B cell (primary cell): ENCODE measurements at regions of chr16 and their contacts with region 1.

Region 1: DNA sequence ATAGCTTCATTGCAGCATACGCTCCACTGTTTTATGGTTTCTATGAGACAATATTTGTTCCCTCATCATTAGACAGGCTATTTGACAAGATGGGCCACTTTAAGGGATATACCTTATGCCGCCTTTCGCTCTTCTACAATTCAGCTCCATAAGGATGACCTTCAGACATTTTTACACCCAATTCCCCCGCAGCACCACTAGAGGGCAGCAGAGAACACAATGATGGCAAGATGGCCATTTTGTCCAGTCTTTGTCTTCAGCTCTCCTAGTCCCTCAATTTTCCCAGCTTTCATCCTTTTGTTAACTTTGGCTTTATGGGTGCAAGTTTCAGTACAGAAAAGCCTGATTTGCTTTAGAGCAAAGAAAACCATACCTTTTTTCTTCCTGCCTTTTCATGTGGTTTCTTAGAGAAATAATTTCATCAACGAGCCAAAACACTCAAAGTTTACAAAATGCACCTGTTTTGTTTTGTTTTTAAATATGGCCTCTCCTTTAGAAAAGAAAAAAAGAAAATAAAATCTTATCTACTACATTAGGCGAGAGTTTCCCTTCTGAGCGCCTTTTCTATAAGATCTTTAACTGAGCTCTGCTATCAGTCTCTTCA is 355.3 kb downstream of the TOX3 start:
- DNase-seq: peak; percentile 60
- ATAC-seq: no peak
- H3K4me3 ChIP-seq: no peak overlapping the region
- H3K4me3 Mint-ChIP-seq: no peak overlapping the region
- H3K27ac ChIP-seq: no peak overlapping the region
- H3K27ac Mint-ChIP-seq: no peak overlapping the region
- H3K4me1 ChIP-seq: no peaks in the 10 kb centered on the region
- H3K4me1 Mint-ChIP-seq: no peaks in the 10 kb centered on the region
- H3K27me3 ChIP-seq: no peaks in the 10 kb centered on the region
- H3K27me3 Mint-ChIP-seq: no peaks in the 10 kb centered on the region
- CTCF ChIP-seq: peak; percentile 97

Region 2: DNA sequence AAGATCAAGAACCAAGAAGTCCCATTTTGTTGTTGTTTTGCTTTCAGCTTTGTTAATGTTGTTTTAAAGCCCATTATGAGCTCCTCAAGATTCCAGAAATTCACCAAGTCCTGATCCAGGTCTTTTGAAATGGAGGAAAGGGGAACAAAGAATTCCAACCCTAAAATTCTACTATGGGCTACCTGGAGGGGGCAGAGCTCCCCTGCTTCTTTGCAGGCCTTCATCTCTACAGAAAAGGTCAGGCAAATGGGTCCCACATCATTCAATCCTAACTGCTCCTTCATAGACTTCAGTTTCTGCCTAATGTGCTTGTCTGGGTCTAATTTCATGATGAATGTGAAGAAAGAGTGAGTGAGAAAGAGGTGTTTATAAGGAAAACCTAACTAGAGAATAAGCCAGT is 20.2 kb before region 1 on chr16:
- CTCF ChIA-PET with region 1: interaction called, 14 read pairs
- POLR2A ChIA-PET with region 1: no interaction called
- intact Hi-C with region 1: no loop called
- DNase-seq: no peak
- ATAC-seq: no peak
- H3K4me3 ChIP-seq: no peak overlapping the region
- H3K4me3 Mint-ChIP-seq: no peak overlapping the region
- H3K27ac ChIP-seq: no peak overlapping the region
- H3K27ac Mint-ChIP-seq: no peak overlapping the region
- H3K4me1 ChIP-seq: no peaks in the 10 kb centered on the region
- H3K4me1 Mint-ChIP-seq: no peaks in the 10 kb centered on the region
- H3K27me3 ChIP-seq: no peaks in the 10 kb centered on the region
- H3K27me3 Mint-ChIP-seq: no peaks in the 10 kb centered on the region
- CTCF ChIP-seq: no peak

Region 3: GRCh38 chr16:52203096-52203495 is 11.5 kb after region 1 on chr16:
- CTCF ChIA-PET with region 1: interaction called, 14 read pairs
- POLR2A ChIA-PET with region 1: no interaction called
- intact Hi-C with region 1: no loop called
- DNase-seq: no peak
- ATAC-seq: no peak
- H3K4me3 ChIP-seq: no peak overlapping the region
- H3K4me3 Mint-ChIP-seq: no peak overlapping the region
- H3K27ac ChIP-seq: no peak overlapping the region
- H3K27ac Mint-ChIP-seq: no peak overlapping the region
- H3K4me1 ChIP-seq: no peaks in the 10 kb centered on the region
- H3K4me1 Mint-ChIP-seq: no peaks in the 10 kb centered on the region
- H3K27me3 ChIP-seq: no peaks in the 10 kb centered on the region
- H3K27me3 Mint-ChIP-seq: no peaks in the 10 kb centered on the region
- CTCF ChIP-seq: no peak

Region 4: GRCh38 chr16:53022374-53022773 is 830.7 kb after region 1 on chr16:
- CTCF ChIA-PET with region 1: no interaction called
- POLR2A ChIA-PET with region 1: no interaction called
- intact Hi-C with region 1: loop called (anchors 5 kb)
- DNase-seq: no peak
- ATAC-seq: no peak
- H3K4me3 ChIP-seq: no peak overlapping the region
- H3K4me3 Mint-ChIP-seq: no peak overlapping the region
- H3K27ac ChIP-seq: no peak overlapping the region
- H3K27ac Mint-ChIP-seq: no peak overlapping the region
- H3K4me1 ChIP-seq: no peaks in the 10 kb centered on the region
- H3K4me1 Mint-ChIP-seq: no peaks in the 10 kb centered on the region
- H3K27me3 ChIP-seq: no peaks in the 10 kb centered on the region
- H3K27me3 Mint-ChIP-seq: peaks cover 11% of the 10 kb centered on the region
- CTCF ChIP-seq: no peak

Region 5: GRCh38 chr16:53282975-53283946 is 1091.6 kb after region 1 on chr16:
- CTCF ChIA-PET with region 1: interaction called, 21 read pairs
- POLR2A ChIA-PET with region 1: no interaction called
- intact Hi-C with region 1: no loop called
- DNase-seq: peak; percentile 29
- ATAC-seq: no peak
- H3K4me3 ChIP-seq: no peak overlapping the region
- H3K4me3 Mint-ChIP-seq: no peak overlapping the region
- H3K27ac ChIP-seq: no peak overlapping the region
- H3K27ac Mint-ChIP-seq: no peak overlapping the region
- H3K4me1 ChIP-seq: no peaks in the 10 kb centered on the region
- H3K4me1 Mint-ChIP-seq: no peaks in the 10 kb centered on the region
- H3K27me3 ChIP-seq: no peaks in the 10 kb centered on the region
- H3K27me3 Mint-ChIP-seq: no peaks in the 10 kb centered on the region
- CTCF ChIP-seq: peak; percentile 55

Region 6: GRCh38 chr16:53952215-53953208 is 1760.9 kb after region 1 on chr16:
- CTCF ChIA-PET with region 1: no interaction called
- POLR2A ChIA-PET with region 1: no interaction called
- intact Hi-C with region 1: loop called (anchors 5 kb)
- DNase-seq: peak; percentile 22
- ATAC-seq: no peak
- H3K4me3 ChIP-seq: no peak overlapping the region
- H3K4me3 Mint-ChIP-seq: no peak overlapping the region
- H3K27ac ChIP-seq: no peak overlapping the region
- H3K27ac Mint-ChIP-seq: peak overlapping the region; percentile 13
- H3K4me1 ChIP-seq: peaks cover 13 to 18% of the 10 kb centered on the region in 2 donors
- H3K4me1 Mint-ChIP-seq: peaks cover 41% of the 10 kb centered on the region
- H3K27me3 ChIP-seq: no peaks in the 10 kb centered on the region
- H3K27me3 Mint-ChIP-seq: no peaks in the 10 kb centered on the region
- CTCF ChIP-seq: no peak